ENCODE measurements at regions of chr3 and their contacts with region 1.

Region 1: DNA sequence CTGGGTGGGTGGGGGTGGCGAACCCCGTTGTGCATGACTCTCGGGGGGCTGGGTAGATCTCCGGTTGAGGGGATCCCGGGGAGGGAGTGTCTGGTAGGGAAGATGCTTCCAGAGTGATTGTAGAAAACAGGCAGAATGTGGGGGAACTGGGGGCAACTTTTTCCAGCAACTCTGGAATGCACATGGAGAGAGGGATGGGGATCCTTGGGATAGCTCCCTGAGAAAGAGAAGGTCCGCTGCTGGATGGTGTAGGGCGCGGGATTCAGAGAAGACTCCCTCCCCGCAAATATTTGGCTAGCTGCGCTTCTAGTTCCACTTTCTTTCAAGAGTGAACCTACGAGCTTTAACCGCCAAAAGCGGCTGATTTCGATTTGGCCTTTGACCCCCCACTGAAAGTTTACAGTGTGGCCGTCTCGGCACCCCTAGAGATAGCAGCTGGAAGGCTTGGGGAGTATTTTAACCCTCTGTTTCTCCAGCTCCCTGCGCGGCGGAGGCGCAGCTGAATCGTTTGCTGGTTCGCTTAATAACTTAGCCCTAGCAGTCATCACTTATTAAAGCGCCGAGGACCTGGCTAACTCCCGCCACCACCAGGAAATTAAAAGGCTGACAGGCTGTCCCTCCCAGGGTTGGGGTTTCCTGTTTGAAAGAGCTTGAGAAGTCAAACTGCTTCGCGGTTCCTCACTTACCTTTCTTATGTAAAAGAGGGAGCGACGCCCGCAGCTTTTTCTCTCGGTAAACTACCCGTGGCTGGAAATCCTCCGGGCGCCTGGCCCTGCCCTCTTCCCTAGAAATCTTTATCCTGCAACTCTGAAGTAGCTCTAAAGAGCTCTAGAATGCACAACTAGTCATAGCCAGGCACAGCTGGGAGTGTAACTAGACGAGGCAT is 1.2 kb downstream of the PHLDB2 start:
- DNase-seq: peak; percentile 81
- ATAC-seq: peak; percentile 76

Region 2: DNA sequence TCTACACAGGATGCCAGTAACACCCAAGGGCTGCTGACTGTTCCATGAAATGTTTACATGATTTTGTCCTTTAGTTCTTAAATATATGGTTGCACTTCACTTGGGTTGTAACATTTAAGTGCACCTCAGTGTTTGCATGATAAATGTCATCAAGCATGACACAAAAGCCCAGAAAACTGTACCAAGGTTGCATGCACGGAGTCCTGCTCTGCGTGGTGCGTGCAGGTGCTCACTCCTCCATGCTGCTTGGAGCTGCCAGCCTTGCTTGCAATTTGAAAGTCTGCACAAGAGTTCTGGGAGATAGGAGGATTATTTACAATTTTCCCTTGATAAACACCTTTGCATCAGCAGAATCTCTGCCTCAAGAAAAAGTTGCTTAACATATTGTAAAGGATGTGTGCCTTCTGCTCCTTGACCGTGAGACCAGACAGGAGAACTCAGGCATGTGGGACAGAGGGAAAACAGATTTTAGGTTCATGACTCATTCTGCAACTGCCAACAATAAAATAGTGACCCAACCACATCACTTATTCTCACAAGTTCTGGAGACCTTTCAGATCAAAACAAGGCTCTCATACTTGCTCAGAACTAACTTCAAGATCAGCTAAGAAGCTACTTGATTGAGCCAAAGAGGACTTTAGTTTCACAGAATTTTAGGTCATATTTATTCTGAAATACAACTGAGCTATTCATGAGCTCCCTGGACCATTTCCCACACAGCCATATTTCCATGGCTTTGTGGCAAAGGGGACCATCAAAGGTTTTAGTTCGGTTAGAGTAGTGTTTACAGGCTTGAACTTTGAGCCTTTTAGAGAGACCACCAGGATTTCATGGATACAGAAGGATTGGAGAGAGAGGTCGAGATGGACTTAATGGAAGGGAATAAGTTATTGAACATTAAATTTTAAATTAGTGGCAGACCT is 136.7 kb before region 1 on chr3:
- intact Hi-C with region 1: loop called (anchors 5 kb)
- DNase-seq: no peak
- ATAC-seq: peak; percentile 42

Region 3: GRCh38 chr3:111737706-111738086 is 122.5 kb before region 1 on chr3:
- intact Hi-C with region 1: loop called (anchors 5 kb)
- DNase-seq: no peak
- ATAC-seq: peak; percentile 79

Region 4: GRCh38 chr3:111874177-111874820 is 14.1 kb after region 1 on chr3:
- intact Hi-C with region 1: no loop called
- DNase-seq: no peak
- ATAC-seq: no peak

Region 5: GRCh38 chr3:111910806-111911205 is 50.6 kb after region 1 on chr3:
- intact Hi-C with region 1: loop called (anchors 10 kb)
- DNase-seq: no peak
- ATAC-seq: peak; percentile 72

Region 6: DNA sequence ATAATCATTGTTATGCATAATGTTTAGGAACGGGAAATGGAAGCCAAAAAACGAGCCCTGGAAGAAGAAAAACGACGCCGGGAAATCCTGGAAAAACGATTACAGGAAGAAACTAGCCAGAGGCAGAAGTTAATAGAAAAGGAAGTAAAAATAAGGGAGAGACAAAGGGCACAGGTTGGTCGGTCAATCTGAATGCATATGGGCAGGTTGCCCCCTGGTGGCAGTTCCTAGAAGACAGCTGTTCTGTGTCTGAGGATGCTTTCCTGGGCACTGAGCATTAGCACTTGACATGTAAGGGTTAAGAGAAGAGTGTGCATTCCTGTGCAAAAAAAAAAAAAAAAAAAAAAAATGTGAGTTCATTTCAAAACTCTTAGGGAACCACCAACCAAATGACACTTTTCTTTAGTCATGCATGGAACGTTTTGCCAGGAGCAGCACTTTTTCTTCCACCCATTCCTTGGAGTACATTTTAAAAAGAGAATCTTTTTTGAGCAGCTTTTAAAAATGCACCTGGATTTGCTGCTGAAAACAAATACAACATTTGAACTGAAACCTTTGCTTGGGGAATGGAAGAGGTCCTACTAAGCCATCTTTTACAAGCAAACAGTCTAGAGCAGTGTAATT is 107.5 kb after region 1 on chr3:
- intact Hi-C with region 1: loop called (anchors 5 kb)
- DNase-seq: peak; percentile 83
- ATAC-seq: peak; percentile 86

Measured in Right ventricle myocardium superior (tissue), 1 donor.